ENCODE measurements at regions of chr19 and their contacts with region 1.

Region 1: DNA sequence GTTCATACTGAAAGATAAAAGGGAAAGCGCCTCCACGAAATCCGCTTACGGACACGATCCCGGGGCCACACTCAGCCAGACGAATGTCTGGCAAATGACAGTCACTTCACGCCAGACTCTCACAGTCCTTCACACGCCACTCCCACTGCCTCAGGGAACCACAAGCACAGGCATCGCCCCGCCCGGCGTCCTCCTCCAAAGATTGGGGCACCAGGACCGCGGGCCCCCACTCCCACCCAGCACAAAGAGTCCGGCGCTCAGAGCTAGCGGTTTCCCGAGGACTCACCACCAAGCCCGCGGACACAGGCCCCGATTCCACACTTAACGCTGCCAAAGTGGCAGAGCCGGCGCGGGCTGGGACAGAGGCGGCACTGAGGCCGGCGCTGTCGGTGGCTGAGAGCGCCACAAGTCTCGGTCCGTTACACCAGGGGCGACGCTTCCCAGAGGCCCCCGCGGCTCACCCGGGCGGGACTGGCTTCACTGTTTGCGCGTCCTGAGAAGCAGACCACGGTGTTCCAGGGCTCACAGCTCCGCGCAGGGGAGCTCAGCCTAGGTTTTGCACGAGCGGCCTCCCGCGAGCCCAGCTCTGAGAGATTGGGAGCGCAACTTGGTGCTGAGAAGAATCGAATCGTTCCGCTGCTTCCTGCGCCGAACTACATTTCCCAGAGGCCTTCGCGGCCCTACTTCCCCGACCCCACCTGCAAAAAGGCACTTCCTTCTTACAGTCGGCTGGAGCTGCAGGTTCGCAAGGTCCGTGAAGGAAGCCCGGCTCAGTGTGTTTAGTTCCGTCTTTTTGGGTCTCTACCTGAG is at the start of gene ZNF569:
- DNase-seq: peak; percentile 68 to 95 (median 92)
- ATAC-seq: peak; percentile 79
- H3K4me3 ChIP-seq: peak within 1 kb of the TSS; percentile 79
- H3K4me3 Mint-ChIP-seq: peak within 1 kb of the TSS; percentile 91 to 100 (median 95)
- H3K27ac ChIP-seq: peak within 1 kb of the TSS; percentile 96
- H3K27ac Mint-ChIP-seq: peak within 1 kb of the TSS; percentile 93 to 100 (median 98)
- H3K4me1 ChIP-seq: peaks cover 13 to 16% of the 10 kb centered on the region in 2 donors
- H3K4me1 Mint-ChIP-seq: peaks cover 26 to 54% (median 45%) of the 10 kb centered on the region in 7 donors
- H3K27me3 ChIP-seq: no peaks in the 10 kb centered on the region
- H3K27me3 Mint-ChIP-seq: no peaks in the 10 kb centered on the region
- total RNA-seq, gene ZNF569: 4.1 to 16.4 (median 8.5) TPM

Region 2: GRCh38 chr19:36132489-36132891 is 1334.5 kb before region 1 on chr19:
- CTCF ChIA-PET with region 1: no interaction called
- POLR2A ChIA-PET with region 1: no interaction called
- intact Hi-C with region 1: loop called in 1 of 2 experiments (anchors 10 kb)
- DNase-seq: no peak
- ATAC-seq: peak; percentile 50
- H3K4me3 ChIP-seq: no peak overlapping the region
- H3K4me3 Mint-ChIP-seq: peak overlapping the region in 2 of 10 donors; percentile 12 to 29
- H3K27ac ChIP-seq: no peak overlapping the region
- H3K27ac Mint-ChIP-seq: peak overlapping the region in 1 of 9 donors; percentile 80
- H3K4me1 ChIP-seq: no peaks in the 10 kb centered on the region
- H3K4me1 Mint-ChIP-seq: peaks cover 0 to 34% (median 5%) of the 10 kb centered on the region in 7 donors
- H3K27me3 ChIP-seq: no peaks in the 10 kb centered on the region
- H3K27me3 Mint-ChIP-seq: no peaks in the 10 kb centered on the region

Region 3: DNA sequence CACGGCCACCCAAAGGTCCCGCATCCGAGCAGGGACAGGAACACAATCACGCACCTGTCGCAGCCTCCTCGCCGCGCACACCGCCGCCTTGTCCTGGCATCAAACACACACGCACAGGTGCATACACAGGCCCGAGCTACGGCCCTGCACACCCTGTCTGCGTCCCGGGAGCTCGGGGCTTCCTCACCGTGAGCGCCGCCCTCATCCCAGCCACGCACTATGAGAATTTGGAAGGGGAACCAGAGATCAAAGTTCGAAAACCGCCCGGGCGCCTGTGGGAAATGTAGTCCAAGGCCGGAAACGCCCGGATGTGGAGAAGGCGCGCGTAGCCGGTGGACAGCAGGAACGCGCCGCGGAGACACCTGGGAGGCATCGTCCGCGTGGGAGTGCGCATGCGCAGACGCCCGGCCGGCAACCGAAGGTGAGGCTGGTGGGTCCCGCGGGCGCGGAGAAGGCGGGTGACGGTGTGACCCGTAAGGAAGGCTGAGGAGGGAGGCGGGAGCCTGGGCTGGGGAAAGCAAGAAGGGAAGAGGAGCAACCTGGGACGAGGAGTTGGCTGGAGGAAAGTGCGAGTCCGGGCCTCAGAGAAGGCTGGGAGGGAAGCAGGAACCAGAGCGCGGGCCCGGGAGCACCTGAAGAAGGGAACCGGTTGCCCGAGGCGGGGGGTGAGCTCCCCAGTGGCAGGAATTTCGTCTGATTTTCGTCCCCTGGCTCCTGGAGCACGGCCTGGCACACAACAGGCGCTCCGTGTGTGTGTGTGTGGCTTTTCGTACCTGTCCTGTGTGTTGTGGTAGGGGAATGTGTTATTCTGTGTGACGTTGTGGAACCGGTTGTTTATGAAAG is 779.6 kb before region 1 on chr19 and contains the start of gene ZNF567:
- CTCF ChIA-PET with region 1: no interaction called
- POLR2A ChIA-PET with region 1: no interaction called
- intact Hi-C with region 1: loop called (anchors 1 to 5 kb)
- DNase-seq: peak; percentile 90 to 99 (median 93)
- ATAC-seq: peak; percentile 97
- H3K4me3 ChIP-seq: peak within 1 kb of the TSS; percentile 85
- H3K4me3 Mint-ChIP-seq: peak within 1 kb of the TSS; percentile 94 to 100 (median 98)
- H3K27ac ChIP-seq: peak within 1 kb of the TSS; percentile 86
- H3K27ac Mint-ChIP-seq: peak within 1 kb of the TSS; percentile 92 to 97 (median 95)
- H3K4me1 ChIP-seq: peaks cover 13 to 22% of the 10 kb centered on the region in 2 donors
- H3K4me1 Mint-ChIP-seq: peaks cover 26 to 49% (median 40%) of the 10 kb centered on the region in 7 donors
- H3K27me3 ChIP-seq: no peaks in the 10 kb centered on the region
- H3K27me3 Mint-ChIP-seq: peaks cover 0 to 5% (median 0%) of the 10 kb centered on the region in 5 donors
- total RNA-seq, gene ZNF567: 7.0 to 18.3 (median 9.3) TPM

Region 4: DNA sequence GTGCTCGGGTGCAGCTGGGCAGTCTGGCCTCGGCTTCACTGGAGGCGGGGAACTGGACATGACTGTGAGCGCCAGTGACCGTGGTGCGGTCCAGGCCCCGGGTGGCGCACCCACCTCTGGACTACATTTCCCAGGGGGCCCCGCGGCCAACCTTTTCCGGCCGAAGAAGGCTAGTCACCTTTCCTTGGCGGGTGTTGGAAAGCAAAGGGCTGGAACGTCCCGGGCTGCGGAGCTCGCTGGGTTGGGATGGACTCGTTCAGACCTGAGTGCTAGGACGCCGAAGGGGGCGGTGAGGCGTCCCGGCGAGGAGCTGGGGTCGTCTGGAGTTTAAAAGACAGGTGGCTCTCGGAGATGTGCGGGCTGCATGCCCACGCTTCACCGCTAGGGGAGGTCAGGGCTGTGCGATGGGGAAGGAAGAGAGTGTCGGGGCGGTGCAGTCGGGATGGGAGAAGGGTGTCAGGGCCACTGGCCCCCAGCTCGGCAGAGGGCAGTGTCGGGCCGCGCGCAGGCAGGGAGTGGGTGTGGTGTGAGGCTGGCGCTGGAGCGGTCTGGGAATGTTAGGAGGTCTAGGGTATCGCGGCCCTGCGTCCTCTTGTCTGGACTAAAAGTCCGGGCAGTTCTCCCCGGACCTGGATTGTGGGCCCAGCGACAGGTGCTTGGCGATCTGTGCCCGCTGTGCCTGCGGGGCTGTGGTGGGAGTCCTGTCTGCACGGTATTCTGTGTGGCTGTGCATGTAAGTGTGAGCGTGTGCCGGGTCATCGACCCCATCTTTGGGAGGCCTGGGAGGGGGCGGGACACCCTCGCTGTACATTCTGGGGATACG is 493.8 kb before region 1 on chr19:
- CTCF ChIA-PET with region 1: no interaction called
- POLR2A ChIA-PET with region 1: no interaction called
- intact Hi-C with region 1: loop called (anchors 1 kb)
- DNase-seq: peak; percentile 56 to 84 (median 73)
- ATAC-seq: peak; percentile 96
- H3K4me3 ChIP-seq: peak overlapping the region; percentile 100
- H3K4me3 Mint-ChIP-seq: peak overlapping the region; percentile 92 to 99 (median 97)
- H3K27ac ChIP-seq: peak overlapping the region; percentile 75
- H3K27ac Mint-ChIP-seq: peak overlapping the region; percentile 83 to 97 (median 92)
- H3K4me1 ChIP-seq: peaks cover 5 to 15% of the 10 kb centered on the region in 2 donors
- H3K4me1 Mint-ChIP-seq: peaks cover 9 to 22% (median 13%) of the 10 kb centered on the region in 7 donors
- H3K27me3 ChIP-seq: no peaks in the 10 kb centered on the region
- H3K27me3 Mint-ChIP-seq: no peaks in the 10 kb centered on the region

Region 5: GRCh38 chr19:37370880-37371661 is 95.9 kb before region 1 on chr19 and contains the start of gene ZNF527:
- CTCF ChIA-PET with region 1: no interaction called
- POLR2A ChIA-PET with region 1: interaction called, 16 read pairs
- intact Hi-C with region 1: loop called (anchors 1 kb)
- DNase-seq: peak; percentile 92 to 97 (median 96)
- ATAC-seq: peak; percentile 96
- H3K4me3 ChIP-seq: peak within 1 kb of the TSS; percentile 85
- H3K4me3 Mint-ChIP-seq: peak within 1 kb of the TSS; percentile 92 to 100 (median 98)
- H3K27ac ChIP-seq: peak within 1 kb of the TSS; percentile 74
- H3K27ac Mint-ChIP-seq: peak within 1 kb of the TSS; percentile 87 to 99 (median 97)
- H3K4me1 ChIP-seq: peaks cover 0 to 8% of the 10 kb centered on the region in 2 donors
- H3K4me1 Mint-ChIP-seq: peaks cover 7 to 25% (median 17%) of the 10 kb centered on the region in 7 donors
- H3K27me3 ChIP-seq: no peaks in the 10 kb centered on the region
- H3K27me3 Mint-ChIP-seq: no peaks in the 10 kb centered on the region
- total RNA-seq, gene ZNF527: 5.6 to 13.6 (median 13.2) TPM

Region 6: GRCh38 chr19:37403403-37403802 is 63.6 kb before region 1 on chr19:
- CTCF ChIA-PET with region 1: no interaction called
- POLR2A ChIA-PET with region 1: no interaction called
- intact Hi-C with region 1: no loop called
- DNase-seq: no peak
- ATAC-seq: no peak
- H3K4me3 ChIP-seq: no peak overlapping the region
- H3K4me3 Mint-ChIP-seq: no peak overlapping the region
- H3K27ac ChIP-seq: no peak overlapping the region
- H3K27ac Mint-ChIP-seq: no peak overlapping the region
- H3K4me1 ChIP-seq: no peaks in the 10 kb centered on the region
- H3K4me1 Mint-ChIP-seq: no peaks in the 10 kb centered on the region
- H3K27me3 ChIP-seq: no peaks in the 10 kb centered on the region
- H3K27me3 Mint-ChIP-seq: no peaks in the 10 kb centered on the region

Region 7: DNA sequence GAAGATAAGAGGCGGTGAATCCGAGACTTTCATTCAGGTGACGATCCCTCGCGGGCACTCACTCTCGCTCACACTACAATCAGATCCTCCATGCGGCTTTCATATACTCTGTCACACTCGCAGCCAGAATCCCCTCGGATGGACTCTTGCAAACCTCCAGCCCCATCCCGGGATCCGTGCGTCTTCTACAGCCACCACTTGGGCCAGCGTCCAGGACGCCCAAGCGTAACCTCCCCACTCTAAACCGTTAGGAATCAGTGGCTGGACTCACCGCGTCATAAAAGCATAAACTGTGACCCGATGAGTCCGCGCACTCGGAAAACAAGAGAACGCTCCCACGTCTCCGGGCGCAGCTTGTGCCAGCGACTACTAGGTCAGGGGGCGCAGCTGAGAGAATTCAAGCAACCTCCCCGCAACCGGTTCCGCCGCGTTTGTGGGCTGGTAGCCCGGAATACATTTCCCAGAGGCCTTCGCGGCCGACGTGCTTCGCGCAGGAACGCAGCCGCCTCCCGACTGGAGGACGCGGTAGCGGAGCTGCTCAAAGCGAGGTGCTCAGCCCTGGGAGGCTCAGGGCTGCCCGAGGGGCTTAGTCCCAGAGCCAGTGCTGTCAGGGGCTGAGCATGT is 225.0 kb after region 1 on chr19:
- CTCF ChIA-PET with region 1: no interaction called
- POLR2A ChIA-PET with region 1: interaction called, 4 read pairs
- intact Hi-C with region 1: loop called in 1 of 2 experiments (anchors 1 kb)
- DNase-seq: peak; percentile 52 to 83 (median 73)
- ATAC-seq: peak; percentile 97
- H3K4me3 ChIP-seq: peak overlapping the region; percentile 95
- H3K4me3 Mint-ChIP-seq: peak overlapping the region; percentile 83 to 98 (median 96)
- H3K27ac ChIP-seq: peak overlapping the region; percentile 82
- H3K27ac Mint-ChIP-seq: peak overlapping the region; percentile 69 to 98 (median 96)
- H3K4me1 ChIP-seq: peaks cover 0 to 4% of the 10 kb centered on the region in 2 donors
- H3K4me1 Mint-ChIP-seq: peaks cover 5 to 17% (median 11%) of the 10 kb centered on the region in 7 donors
- H3K27me3 ChIP-seq: no peaks in the 10 kb centered on the region
- H3K27me3 Mint-ChIP-seq: no peaks in the 10 kb centered on the region

Region 8: GRCh38 chr19:37738371-37738770 is 271.4 kb after region 1 on chr19:
- CTCF ChIA-PET with region 1: no interaction called
- POLR2A ChIA-PET with region 1: no interaction called
- intact Hi-C with region 1: no loop called
- DNase-seq: no peak
- ATAC-seq: no peak
- H3K4me3 ChIP-seq: no peak overlapping the region
- H3K4me3 Mint-ChIP-seq: no peak overlapping the region
- H3K27ac ChIP-seq: no peak overlapping the region
- H3K27ac Mint-ChIP-seq: no peak overlapping the region
- H3K4me1 ChIP-seq: no peaks in the 10 kb centered on the region
- H3K4me1 Mint-ChIP-seq: no peaks in the 10 kb centered on the region
- H3K27me3 ChIP-seq: no peaks in the 10 kb centered on the region
- H3K27me3 Mint-ChIP-seq: no peaks in the 10 kb centered on the region

Region 9: GRCh38 chr19:37928527-37929286 is 461.7 kb after region 1 on chr19:
- CTCF ChIA-PET with region 1: no interaction called
- POLR2A ChIA-PET with region 1: no interaction called
- intact Hi-C with region 1: no loop called
- DNase-seq: no peak
- ATAC-seq: peak; percentile 58
- H3K4me3 ChIP-seq: no peak overlapping the region
- H3K4me3 Mint-ChIP-seq: no peak overlapping the region
- H3K27ac ChIP-seq: no peak overlapping the region
- H3K27ac Mint-ChIP-seq: no peak overlapping the region
- H3K4me1 ChIP-seq: no peaks in the 10 kb centered on the region
- H3K4me1 Mint-ChIP-seq: peaks cover 0 to 36% (median 23%) of the 10 kb centered on the region in 7 donors
- H3K27me3 ChIP-seq: no peaks in the 10 kb centered on the region
- H3K27me3 Mint-ChIP-seq: no peaks in the 10 kb centered on the region

Region 10: DNA sequence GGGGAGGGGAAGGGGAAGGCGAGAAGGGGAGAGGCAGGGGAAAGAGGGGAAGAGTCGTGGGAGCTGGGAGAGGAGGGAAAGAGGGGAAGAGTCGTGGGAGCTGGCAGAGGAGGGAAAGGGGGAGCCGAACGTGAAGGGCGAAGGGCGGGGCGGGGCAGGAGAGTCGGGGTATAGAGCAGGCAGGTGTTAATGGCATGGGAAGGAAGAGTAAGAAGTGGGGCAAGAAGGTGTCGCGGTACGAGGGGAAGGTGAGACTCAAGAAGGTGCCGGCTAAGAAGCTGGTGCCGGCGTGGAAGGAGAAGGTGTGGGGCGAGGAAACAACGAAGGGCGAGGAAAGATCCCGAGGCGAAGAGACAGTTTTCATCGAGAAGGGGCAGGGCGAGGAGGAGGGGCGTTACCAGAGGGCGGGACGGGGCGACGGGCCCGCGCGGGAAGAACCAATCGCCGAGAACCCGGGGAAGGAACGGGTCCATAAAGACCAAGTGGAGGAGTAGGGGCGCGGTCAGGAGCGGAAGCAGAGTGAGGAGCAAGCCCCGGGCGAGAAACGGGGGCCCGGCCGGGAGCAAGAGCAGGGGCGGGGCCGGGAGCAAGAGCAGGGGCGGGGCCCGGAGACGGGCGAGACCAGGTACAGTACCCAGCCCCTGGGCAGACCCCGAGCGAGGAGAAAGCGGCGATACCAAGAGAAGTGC is 869.1 kb after region 1 on chr19:
- CTCF ChIA-PET with region 1: no interaction called
- POLR2A ChIA-PET with region 1: no interaction called
- intact Hi-C with region 1: loop called in 1 of 2 experiments (anchors 2 kb)
- DNase-seq: peak; percentile 86 to 94 (median 93)
- ATAC-seq: peak; percentile 77
- H3K4me3 ChIP-seq: peak overlapping the region; percentile 92
- H3K4me3 Mint-ChIP-seq: peak overlapping the region; percentile 92 to 100 (median 96)
- H3K27ac ChIP-seq: peak overlapping the region; percentile 86
- H3K27ac Mint-ChIP-seq: peak overlapping the region; percentile 91 to 100 (median 97)
- H3K4me1 ChIP-seq: peaks cover 3 to 5% of the 10 kb centered on the region in 2 donors
- H3K4me1 Mint-ChIP-seq: peaks cover 16 to 28% (median 17%) of the 10 kb centered on the region in 7 donors
- H3K27me3 ChIP-seq: no peaks in the 10 kb centered on the region
- H3K27me3 Mint-ChIP-seq: no peaks in the 10 kb centered on the region